Naive thymus-derived CD4-positive, alpha-beta T cell (primary cell): ENCODE measurements at regions of chr6 and their contacts with region 1.

Region 1: GRCh38 chr6:167047554-167047953 is 48.4 kb downstream of the CEP43 start:
- DNase-seq: peak in 6 of 9 donors; percentile 15 to 41 (median 28)
- ATAC-seq: peak; percentile 87
- H3K4me3 ChIP-seq: peak overlapping the region; percentile 5
- H3K4me3 Mint-ChIP-seq: peak overlapping the region in 9 of 10 donors; percentile 18 to 76 (median 53)
- H3K27ac ChIP-seq: peak overlapping the region; percentile 6
- H3K27ac Mint-ChIP-seq: peak overlapping the region; percentile 0 to 72 (median 15)
- H3K4me1 ChIP-seq: peaks cover 5 to 24% of the 10 kb centered on the region in 2 donors
- H3K4me1 Mint-ChIP-seq: peaks cover 13 to 26% (median 22%) of the 10 kb centered on the region in 7 donors
- H3K27me3 ChIP-seq: no peaks in the 10 kb centered on the region
- H3K27me3 Mint-ChIP-seq: no peaks in the 10 kb centered on the region

Region 2: GRCh38 chr6:165511807-165512206 is 1535.7 kb before region 1 on chr6:
- CTCF ChIA-PET with region 1: no interaction called
- POLR2A ChIA-PET with region 1: no interaction called
- intact Hi-C with region 1: no loop called
- DNase-seq: no peak
- ATAC-seq: no peak
- H3K4me3 ChIP-seq: no peak overlapping the region
- H3K4me3 Mint-ChIP-seq: peak overlapping the region in 1 of 10 donors; percentile 22
- H3K27ac ChIP-seq: no peak overlapping the region
- H3K27ac Mint-ChIP-seq: peak overlapping the region in 1 of 9 donors; percentile 15
- H3K4me1 ChIP-seq: no peaks in the 10 kb centered on the region
- H3K4me1 Mint-ChIP-seq: peaks cover 0 to 8% (median 0%) of the 10 kb centered on the region in 7 donors
- H3K27me3 ChIP-seq: no peaks in the 10 kb centered on the region
- H3K27me3 Mint-ChIP-seq: no peaks in the 10 kb centered on the region

Region 3: DNA sequence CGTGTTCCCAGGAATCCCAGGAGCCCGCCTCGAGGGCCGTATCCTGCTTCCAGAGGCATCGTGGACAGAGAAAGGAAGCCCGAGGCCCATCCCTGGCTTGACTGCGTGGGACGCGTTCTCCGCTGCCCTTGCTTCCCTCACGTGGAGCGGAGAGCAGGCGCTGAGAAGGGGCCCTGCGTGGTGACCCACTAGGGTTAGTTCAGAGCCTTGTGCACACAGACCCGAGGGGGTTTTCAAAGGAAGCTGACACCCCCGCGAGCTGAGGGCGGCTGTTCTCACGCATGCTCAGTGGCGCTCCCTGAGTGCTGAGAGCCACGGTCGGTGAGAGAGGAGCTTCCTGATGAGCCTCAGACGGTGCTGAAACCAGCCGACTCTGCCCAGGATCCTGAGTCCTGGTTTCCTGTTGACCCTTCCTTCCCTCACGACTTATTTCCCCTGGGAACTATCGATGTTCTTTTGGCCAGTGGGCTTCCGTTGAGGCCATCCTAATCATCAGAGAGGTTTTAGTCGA is 46.4 kb after region 1 on chr6:
- CTCF ChIA-PET with region 1: interaction called, 3 read pairs
- POLR2A ChIA-PET with region 1: interaction called, 3 read pairs
- intact Hi-C with region 1: loop called in 1 of 2 experiments (anchors 5 kb)
- DNase-seq: peak in 7 of 9 donors; percentile 11 to 46 (median 30)
- ATAC-seq: peak; percentile 49
- H3K4me3 ChIP-seq: peak overlapping the region; percentile 39
- H3K4me3 Mint-ChIP-seq: peak overlapping the region; percentile 23 to 75 (median 60)
- H3K27ac ChIP-seq: no peak overlapping the region
- H3K27ac Mint-ChIP-seq: peak overlapping the region in 5 of 9 donors; percentile 18 to 69 (median 35)
- H3K4me1 ChIP-seq: peaks cover 37 to 43% of the 10 kb centered on the region in 2 donors
- H3K4me1 Mint-ChIP-seq: peaks cover 33 to 60% (median 53%) of the 10 kb centered on the region in 7 donors
- H3K27me3 ChIP-seq: no peaks in the 10 kb centered on the region
- H3K27me3 Mint-ChIP-seq: peaks cover 0 to 11% (median 0%) of the 10 kb centered on the region in 5 donors

Region 4: DNA sequence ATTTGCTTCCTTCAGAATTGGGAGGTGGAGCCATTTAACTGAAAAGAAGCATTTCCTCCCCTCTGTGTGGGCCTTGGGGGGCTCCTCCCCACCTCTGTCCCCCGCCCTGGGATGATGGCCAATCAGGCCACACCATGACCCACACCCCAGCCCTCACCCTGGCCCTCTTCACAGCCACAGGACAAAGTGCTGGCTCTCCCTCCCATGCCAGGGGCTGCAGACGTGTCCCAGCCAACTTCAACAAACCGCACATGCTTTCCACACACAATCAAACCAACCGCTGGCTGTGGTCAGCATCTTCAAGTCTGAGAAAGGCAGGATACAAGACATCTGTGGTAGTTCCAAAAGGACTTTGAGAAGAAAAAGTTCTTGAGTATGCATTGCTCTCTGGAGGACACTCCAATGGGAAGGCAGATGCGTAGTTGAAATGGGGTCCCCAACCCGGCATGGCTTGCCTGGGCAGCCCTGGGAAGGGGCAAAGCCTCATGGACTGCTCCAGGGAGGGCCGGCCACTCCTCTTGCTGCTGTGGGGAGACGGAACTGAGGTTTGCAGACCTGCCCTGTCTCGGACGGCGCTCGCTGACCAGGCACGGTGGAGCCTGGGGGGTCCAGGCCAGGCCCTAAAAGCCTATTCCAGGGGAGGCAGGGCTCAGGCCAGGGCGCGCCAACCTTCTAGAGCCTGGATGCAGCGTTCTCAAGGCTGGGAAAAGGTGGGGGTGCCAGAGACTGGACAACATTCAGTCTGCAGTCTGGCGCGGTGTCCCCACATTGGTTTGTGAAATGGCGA is 289.5 kb after region 1 on chr6:
- CTCF ChIA-PET with region 1: no interaction called
- POLR2A ChIA-PET with region 1: no interaction called
- intact Hi-C with region 1: no loop called
- DNase-seq: no peak
- ATAC-seq: no peak
- H3K4me3 ChIP-seq: no peak overlapping the region
- H3K4me3 Mint-ChIP-seq: no peak overlapping the region
- H3K27ac ChIP-seq: no peak overlapping the region
- H3K27ac Mint-ChIP-seq: no peak overlapping the region
- H3K4me1 ChIP-seq: no peaks in the 10 kb centered on the region
- H3K4me1 Mint-ChIP-seq: peaks cover 0 to 2% (median 0%) of the 10 kb centered on the region in 7 donors
- H3K27me3 ChIP-seq: no peaks in the 10 kb centered on the region
- H3K27me3 Mint-ChIP-seq: peaks cover 0 to 16% (median 7%) of the 10 kb centered on the region in 5 donors

Region 5: GRCh38 chr6:167501781-167502385 is 454.3 kb after region 1 on chr6:
- CTCF ChIA-PET with region 1: no interaction called
- POLR2A ChIA-PET with region 1: no interaction called
- intact Hi-C with region 1: no loop called
- DNase-seq: no peak
- ATAC-seq: no peak
- H3K4me3 ChIP-seq: no peak overlapping the region
- H3K4me3 Mint-ChIP-seq: no peak overlapping the region
- H3K27ac ChIP-seq: no peak overlapping the region
- H3K27ac Mint-ChIP-seq: no peak overlapping the region
- H3K4me1 ChIP-seq: no peaks in the 10 kb centered on the region
- H3K4me1 Mint-ChIP-seq: no peaks in the 10 kb centered on the region
- H3K27me3 ChIP-seq: no peaks in the 10 kb centered on the region
- H3K27me3 Mint-ChIP-seq: peaks cover 0 to 20% (median 0%) of the 10 kb centered on the region in 5 donors